Activated CD4-positive, alpha-beta memory T cell treated with anti-CD3 and anti-CD28 coated beads, Interleukin-2, amount 10 ng/mL, durations not matched to agents 7 days and 5 days (primary cell): ENCODE measurements at regions of chr17 and their contacts with region 1.

Region 1: DNA sequence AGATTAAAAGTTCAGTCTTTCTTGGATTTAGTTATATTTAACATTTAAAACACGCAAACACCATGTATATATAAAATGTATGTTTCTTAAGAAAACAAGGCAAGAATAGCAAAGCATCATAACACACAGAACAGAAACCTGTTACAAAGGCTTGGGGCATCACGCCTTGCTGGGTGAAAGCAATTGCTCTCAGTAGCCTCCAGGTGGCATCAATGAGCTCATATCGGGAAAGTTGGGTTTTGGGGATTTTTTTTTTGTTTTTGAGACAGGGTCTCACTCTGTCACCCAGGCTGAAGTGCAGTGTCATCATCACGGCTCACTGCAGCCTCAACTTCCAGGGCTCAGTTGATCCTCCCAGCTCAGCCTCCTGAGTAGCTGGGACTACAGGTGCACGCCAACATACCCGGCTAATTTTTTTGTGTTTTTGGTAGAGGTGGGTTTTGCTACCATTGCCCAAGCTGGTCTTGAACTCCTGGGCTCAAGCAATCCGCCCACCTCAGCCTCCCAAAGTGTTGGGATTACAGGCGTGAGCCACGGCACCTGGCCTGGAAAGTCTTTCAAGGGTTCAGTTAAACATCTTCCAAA is 56.9 kb downstream of the CYB5D2 start:
- DNase-seq: peak; percentile 43
- H3K4me3 Mint-ChIP-seq: no peak overlapping the region
- H3K27ac Mint-ChIP-seq: no peak overlapping the region
- H3K4me1 Mint-ChIP-seq: no peaks in the 10 kb centered on the region
- H3K27me3 Mint-ChIP-seq: no peaks in the 10 kb centered on the region

Region 2: GRCh38 chr17:4412933-4413831 is 213.3 kb after region 1 on chr17:
- CTCF ChIA-PET with region 1: interaction called, 22 read pairs
- POLR2A ChIA-PET with region 1: interaction called, 3 read pairs
- DNase-seq: peak; percentile 93
- H3K4me3 Mint-ChIP-seq: peak overlapping the region; percentile 60
- H3K27ac Mint-ChIP-seq: peak overlapping the region; percentile 32
- H3K4me1 Mint-ChIP-seq: peaks cover 7% of the 10 kb centered on the region
- H3K27me3 Mint-ChIP-seq: no peaks in the 10 kb centered on the region